Ovary (tissue), 10 donors: ENCODE measurements at regions of chr2 and their contacts with region 1.

Region 1: GRCh38 chr2:174465327-174465726 is 21.5 kb downstream of the GPR155 start:
- DNase-seq: no peak
- H3K4me3 ChIP-seq: no peak overlapping the region
- H3K27ac ChIP-seq: no peak overlapping the region
- H3K4me1 ChIP-seq: no peaks in the 10 kb centered on the region
- H3K27me3 ChIP-seq: no peaks in the 10 kb centered on the region
- CTCF ChIP-seq: no peak
- EP300 ChIP-seq: no peak
- POLR2A ChIP-seq: no peak

Region 2: DNA sequence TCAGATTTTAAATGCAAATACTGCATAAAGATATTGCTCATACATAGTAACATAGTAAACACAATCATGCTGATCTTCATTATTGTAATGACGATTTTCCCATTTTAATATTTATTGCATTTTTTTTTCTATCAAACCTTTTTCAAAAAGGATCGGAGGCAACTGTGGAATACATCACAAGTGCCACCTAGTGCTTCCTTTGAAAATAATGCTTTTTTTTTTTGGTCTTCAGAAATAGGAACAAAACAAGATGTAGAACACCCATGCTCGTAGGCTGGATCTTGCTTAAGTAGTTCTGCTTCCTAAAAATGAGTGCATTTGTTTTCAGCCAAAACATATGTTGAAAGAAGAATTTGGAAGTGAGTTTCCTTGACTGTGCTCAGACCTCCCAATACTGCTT is 57.2 kb after region 1 on chr2:
- intact Hi-C with region 1: loop called in 1 of 4 experiments (anchors 10 kb)
- DNase-seq: no peak
- H3K4me3 ChIP-seq: no peak overlapping the region
- H3K27ac ChIP-seq: no peak overlapping the region
- H3K4me1 ChIP-seq: no peaks in the 10 kb centered on the region
- H3K27me3 ChIP-seq: no peaks in the 10 kb centered on the region
- CTCF ChIP-seq: peak in 1 of 3 donors; percentile 18
- EP300 ChIP-seq: no peak
- POLR2A ChIP-seq: no peak

Region 3: DNA sequence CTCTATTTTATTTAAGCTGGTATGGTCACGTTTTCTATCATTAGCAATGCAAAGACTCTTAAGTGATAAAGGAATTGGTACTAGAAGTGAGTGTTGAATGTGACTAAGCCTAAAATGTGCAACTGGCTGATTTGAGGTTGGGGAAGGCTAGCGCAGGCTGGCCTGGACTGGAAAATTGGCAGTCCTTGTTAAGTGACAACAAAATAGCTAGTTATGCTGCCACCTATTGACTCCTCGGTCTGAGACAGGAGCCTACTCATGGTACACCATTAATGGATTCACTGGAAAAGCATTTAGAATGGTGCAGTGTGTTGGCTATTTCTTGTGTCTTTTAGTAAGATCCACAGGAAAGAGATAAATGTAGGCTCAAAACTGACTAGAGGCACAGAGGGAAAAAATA is 138.0 kb after region 1 on chr2:
- intact Hi-C with region 1: loop called in 1 of 4 experiments (anchors 5 kb)
- DNase-seq: peak in 2 of 5 donors; percentile 45 to 63
- H3K4me3 ChIP-seq: no peak overlapping the region
- H3K27ac ChIP-seq: no peak overlapping the region
- H3K4me1 ChIP-seq: peaks cover 1% of the 10 kb centered on the region
- H3K27me3 ChIP-seq: no peaks in the 10 kb centered on the region
- CTCF ChIP-seq: peak in 2 of 3 donors; percentile 28 to 39
- EP300 ChIP-seq: no peak
- POLR2A ChIP-seq: no peak

Region 4: GRCh38 chr2:174682578-174683391 is 217.5 kb after region 1 on chr2:
- intact Hi-C with region 1: loop called in 2 of 4 experiments (anchors 5 to 10 kb)
- DNase-seq: peak; percentile 69 to 83 (median 77)
- H3K4me3 ChIP-seq: peak overlapping the region; percentile 85
- H3K27ac ChIP-seq: peak overlapping the region; percentile 53 to 72
- H3K4me1 ChIP-seq: peaks cover 1% of the 10 kb centered on the region
- H3K27me3 ChIP-seq: no peaks in the 10 kb centered on the region
- CTCF ChIP-seq: no peak
- EP300 ChIP-seq: no peak
- POLR2A ChIP-seq: no peak

Region 5: GRCh38 chr2:174688079-174688478 is 222.8 kb after region 1 on chr2:
- intact Hi-C with region 1: loop called (anchors 5 to 10 kb)
- DNase-seq: no peak
- H3K4me3 ChIP-seq: no peak overlapping the region
- H3K27ac ChIP-seq: no peak overlapping the region
- H3K4me1 ChIP-seq: no peaks in the 10 kb centered on the region
- H3K27me3 ChIP-seq: no peaks in the 10 kb centered on the region
- CTCF ChIP-seq: peak in 1 of 3 donors; percentile 38
- EP300 ChIP-seq: no peak
- POLR2A ChIP-seq: no peak

Region 6: GRCh38 chr2:174697255-174697654 is 231.9 kb after region 1 on chr2:
- intact Hi-C with region 1: loop called in 2 of 4 experiments (anchors 10 kb)
- DNase-seq: peak in 1 of 5 donors; percentile 31
- H3K4me3 ChIP-seq: no peak overlapping the region
- H3K27ac ChIP-seq: no peak overlapping the region
- H3K4me1 ChIP-seq: no peaks in the 10 kb centered on the region
- H3K27me3 ChIP-seq: no peaks in the 10 kb centered on the region
- CTCF ChIP-seq: peak in 1 of 3 donors; percentile 26
- EP300 ChIP-seq: no peak
- POLR2A ChIP-seq: no peak